Left ventricle myocardium superior (tissue), 1 donor: ENCODE measurements at regions of chr7 and their contacts with region 1.

Region 1: DNA sequence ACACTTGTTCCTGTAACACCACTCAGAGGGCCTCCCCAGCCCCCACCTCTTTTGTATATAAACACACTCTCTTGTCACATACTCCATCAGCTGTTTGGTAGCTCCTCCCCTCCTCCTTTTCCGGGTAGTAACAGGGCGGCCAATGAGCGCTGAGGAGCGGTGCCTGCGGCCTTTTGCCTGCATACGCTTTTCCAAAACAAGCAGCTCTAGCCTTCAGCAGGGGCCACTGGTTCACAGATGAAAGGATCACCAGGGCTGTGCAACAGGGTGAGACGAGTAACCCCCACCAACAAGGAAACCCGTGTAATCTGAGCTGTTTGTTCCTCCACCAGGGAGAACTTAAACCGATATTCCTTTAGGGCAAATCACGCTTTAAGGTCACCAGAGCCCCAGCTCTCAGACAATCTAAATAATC is 3.9 kb downstream of the UBE2H start:
- DNase-seq: peak; percentile 89
- ATAC-seq: peak; percentile 75

Region 2: DNA sequence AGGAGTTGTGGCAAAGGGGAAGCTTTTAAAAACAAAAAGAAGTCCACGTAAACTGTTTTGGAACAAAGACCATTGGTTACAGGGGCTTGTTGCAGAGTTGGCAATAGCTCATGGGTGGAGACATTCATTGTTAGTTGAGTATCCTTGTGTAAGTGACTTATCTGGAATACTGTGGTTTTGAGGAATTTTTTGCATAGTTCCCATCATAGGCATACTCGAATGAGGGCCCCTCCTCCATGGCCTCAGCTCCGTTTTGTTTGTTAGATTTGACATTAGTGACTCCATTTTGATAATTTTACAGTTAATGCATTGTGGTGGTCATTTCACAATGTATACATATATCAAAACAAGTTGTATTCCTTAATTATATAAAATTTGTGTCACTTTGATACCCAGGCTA is 459.4 kb before region 1 on chr7:
- intact Hi-C with region 1: no loop called
- DNase-seq: no peak
- ATAC-seq: no peak

Region 3: GRCh38 chr7:129611246-129612111 is 337.4 kb before region 1 on chr7 and contains the start of gene NRF1:
- intact Hi-C with region 1: loop called (anchors 5 kb)
- DNase-seq: peak; percentile 96
- ATAC-seq: peak; percentile 97
- total RNA-seq, gene NRF1: 8.7 TPM

Region 4: DNA sequence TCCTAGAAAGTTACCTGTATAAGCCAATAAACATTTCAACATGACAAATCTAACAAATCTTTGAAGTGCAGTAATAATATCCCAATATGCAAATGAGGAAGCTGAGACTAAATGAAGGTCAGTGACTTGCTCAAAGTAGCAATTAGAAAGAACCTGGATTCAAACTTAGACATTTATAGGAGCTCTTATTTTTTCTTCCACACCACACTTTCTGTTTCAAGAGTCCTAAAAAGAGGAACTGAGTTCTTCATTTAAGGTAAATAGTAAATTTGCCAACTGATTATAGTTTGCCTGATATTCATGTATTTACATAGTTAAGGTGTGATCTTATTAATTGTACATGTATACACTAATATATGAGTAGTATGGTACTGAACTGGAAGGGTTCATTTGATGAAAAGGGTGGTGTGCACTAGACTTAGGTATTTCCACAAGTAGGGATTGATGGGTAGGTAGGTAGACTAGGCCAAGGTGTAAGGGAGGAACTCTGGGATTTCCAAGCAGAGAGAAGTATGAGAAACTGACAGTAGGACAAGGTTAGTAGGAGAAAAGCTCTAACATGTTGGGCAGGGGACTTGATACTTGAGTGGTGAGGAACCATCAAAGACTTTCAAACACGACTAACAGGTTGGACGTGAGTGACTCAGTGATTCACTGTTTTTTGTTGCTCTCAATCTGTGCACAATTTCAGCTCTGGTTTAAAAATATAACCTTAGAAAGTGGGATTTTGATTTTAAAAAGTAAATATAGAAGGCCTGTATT is 165.7 kb after region 1 on chr7:
- intact Hi-C with region 1: no loop called
- DNase-seq: no peak
- ATAC-seq: no peak